ENCODE measurements at regions of chr17 and their contacts with region 1.

Region 1: GRCh38 chr17:78689029-78689428 is 93.0 kb downstream of the CYTH1 start:
- DNase-seq: no peak
- H3K4me3 ChIP-seq: no peak overlapping the region
- H3K4me3 Mint-ChIP-seq: no peak overlapping the region
- H3K27ac ChIP-seq: no peak overlapping the region
- H3K27ac Mint-ChIP-seq: peak overlapping the region in 2 of 7 donors; percentile 17 to 27
- H3K4me1 ChIP-seq: no peaks in the 10 kb centered on the region
- H3K4me1 Mint-ChIP-seq: no peaks in the 10 kb centered on the region
- H3K27me3 ChIP-seq: no peaks in the 10 kb centered on the region
- H3K27me3 Mint-ChIP-seq: peaks cover 0 to 2% (median 0%) of the 10 kb centered on the region in 3 donors
- CTCF ChIP-seq: no peak

Region 2: DNA sequence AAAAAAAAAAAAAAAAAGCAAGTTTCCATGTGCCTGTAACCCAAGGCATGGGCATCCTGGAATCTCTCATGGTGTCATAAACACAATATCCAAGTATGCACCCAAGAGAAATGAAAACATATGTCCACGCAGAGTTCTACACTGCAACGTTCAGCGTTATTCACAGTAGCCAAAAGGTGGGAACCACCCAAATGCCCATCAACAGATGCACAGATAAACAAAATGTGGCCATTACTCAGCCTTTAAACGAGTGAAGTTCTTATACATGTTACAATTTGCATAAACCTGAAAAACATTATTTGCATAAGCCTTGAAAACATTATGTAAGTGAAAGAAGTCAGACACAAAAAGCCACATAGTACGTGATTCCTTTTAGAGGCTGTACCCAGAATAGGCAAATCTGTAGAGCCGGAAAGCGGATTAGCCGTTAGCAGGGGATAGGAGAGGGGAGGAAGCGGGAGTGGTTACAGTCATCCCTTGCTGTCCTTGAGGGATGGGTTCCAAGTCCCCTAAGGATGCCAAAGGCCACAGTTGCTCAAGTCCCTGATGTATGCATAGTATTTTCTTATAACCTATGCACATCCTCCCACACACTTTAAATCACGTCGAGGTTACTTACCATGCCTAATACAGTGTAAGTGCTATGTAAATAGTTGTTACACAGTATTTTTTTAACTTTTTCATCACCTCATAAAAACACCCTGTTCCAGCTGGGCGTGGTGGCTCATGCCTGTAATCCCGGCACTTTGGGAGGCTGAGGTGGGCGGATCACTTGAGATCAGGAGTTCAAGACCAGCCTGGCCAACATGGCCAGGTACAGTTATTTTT is 64.5 kb before region 1 on chr17:
- intact Hi-C with region 1: loop called in 1 of 2 experiments (anchors 10 kb)
- DNase-seq: no peak
- H3K4me3 ChIP-seq: no peak overlapping the region
- H3K4me3 Mint-ChIP-seq: no peak overlapping the region
- H3K27ac ChIP-seq: no peak overlapping the region
- H3K27ac Mint-ChIP-seq: no peak overlapping the region
- H3K4me1 ChIP-seq: no peaks in the 10 kb centered on the region
- H3K4me1 Mint-ChIP-seq: no peaks in the 10 kb centered on the region
- H3K27me3 ChIP-seq: no peaks in the 10 kb centered on the region
- H3K27me3 Mint-ChIP-seq: peaks cover 3 to 7% (median 5%) of the 10 kb centered on the region in 3 donors
- CTCF ChIP-seq: no peak